CD4-positive, alpha-beta T cell (primary cell): ENCODE measurements at regions of chr17 and their contacts with region 1.

Region 1: GRCh38 chr17:56819431-56820145 is 14.1 kb downstream of the C17orf67 start:
- DNase-seq: peak; percentile 50 to 86 (median 63)
- ATAC-seq: peak; percentile 98
- H3K4me3 ChIP-seq: no peak overlapping the region
- H3K4me3 Mint-ChIP-seq: no peak overlapping the region
- H3K27ac ChIP-seq: no peak overlapping the region
- H3K27ac Mint-ChIP-seq: no peak overlapping the region
- H3K4me1 ChIP-seq: peaks cover 6% of the 10 kb centered on the region
- H3K4me1 Mint-ChIP-seq: peaks cover 13% of the 10 kb centered on the region
- H3K27me3 ChIP-seq: no peaks in the 10 kb centered on the region
- H3K27me3 Mint-ChIP-seq: no peaks in the 10 kb centered on the region
- CTCF ChIP-seq: peak; percentile 88

Region 2: GRCh38 chr17:56833809-56834379 is 14.3 kb after region 1 on chr17 and contains the starts of genes C17orf67 and DGKE:
- CTCF ChIA-PET with region 1: interaction called, 9 read pairs
- POLR2A ChIA-PET with region 1: interaction called, 20 read pairs
- intact Hi-C with region 1: loop called in 1 of 2 experiments (anchors 2 kb)
- DNase-seq: peak; percentile 97 to 100 (median 99)
- ATAC-seq: peak; percentile 87
- H3K4me3 ChIP-seq: peak within 1 kb of the TSS; percentile 96
- H3K4me3 Mint-ChIP-seq: peak within 1 kb of the TSS; percentile 99
- H3K27ac ChIP-seq: peak within 1 kb of the TSS; percentile 58 to 83
- H3K27ac Mint-ChIP-seq: peak within 1 kb of the TSS; percentile 95
- H3K4me1 ChIP-seq: peaks cover 41% of the 10 kb centered on the region
- H3K4me1 Mint-ChIP-seq: peaks cover 67% of the 10 kb centered on the region
- H3K27me3 ChIP-seq: no peaks in the 10 kb centered on the region
- H3K27me3 Mint-ChIP-seq: no peaks in the 10 kb centered on the region
- CTCF ChIP-seq: no peak
- total RNA-seq, gene C17orf67: 4.3 to 4.8 TPM
- total RNA-seq, gene DGKE: 20.0 to 22.3 TPM

Region 3: GRCh38 chr17:56866496-56866895 is 46.9 kb after region 1 on chr17:
- CTCF ChIA-PET with region 1: interaction called, 3 read pairs
- POLR2A ChIA-PET with region 1: no interaction called
- intact Hi-C with region 1: loop called in 1 of 2 experiments (anchors 1 kb)
- DNase-seq: peak in 4 of 14 experiments; percentile 2 to 34 (median 19)
- ATAC-seq: no peak
- H3K4me3 ChIP-seq: no peak overlapping the region
- H3K4me3 Mint-ChIP-seq: no peak overlapping the region
- H3K27ac ChIP-seq: no peak overlapping the region
- H3K27ac Mint-ChIP-seq: no peak overlapping the region
- H3K4me1 ChIP-seq: peaks cover 2% of the 10 kb centered on the region
- H3K4me1 Mint-ChIP-seq: peaks cover 9% of the 10 kb centered on the region
- H3K27me3 ChIP-seq: no peaks in the 10 kb centered on the region
- H3K27me3 Mint-ChIP-seq: no peaks in the 10 kb centered on the region
- CTCF ChIP-seq: peak; percentile 27

Region 4: DNA sequence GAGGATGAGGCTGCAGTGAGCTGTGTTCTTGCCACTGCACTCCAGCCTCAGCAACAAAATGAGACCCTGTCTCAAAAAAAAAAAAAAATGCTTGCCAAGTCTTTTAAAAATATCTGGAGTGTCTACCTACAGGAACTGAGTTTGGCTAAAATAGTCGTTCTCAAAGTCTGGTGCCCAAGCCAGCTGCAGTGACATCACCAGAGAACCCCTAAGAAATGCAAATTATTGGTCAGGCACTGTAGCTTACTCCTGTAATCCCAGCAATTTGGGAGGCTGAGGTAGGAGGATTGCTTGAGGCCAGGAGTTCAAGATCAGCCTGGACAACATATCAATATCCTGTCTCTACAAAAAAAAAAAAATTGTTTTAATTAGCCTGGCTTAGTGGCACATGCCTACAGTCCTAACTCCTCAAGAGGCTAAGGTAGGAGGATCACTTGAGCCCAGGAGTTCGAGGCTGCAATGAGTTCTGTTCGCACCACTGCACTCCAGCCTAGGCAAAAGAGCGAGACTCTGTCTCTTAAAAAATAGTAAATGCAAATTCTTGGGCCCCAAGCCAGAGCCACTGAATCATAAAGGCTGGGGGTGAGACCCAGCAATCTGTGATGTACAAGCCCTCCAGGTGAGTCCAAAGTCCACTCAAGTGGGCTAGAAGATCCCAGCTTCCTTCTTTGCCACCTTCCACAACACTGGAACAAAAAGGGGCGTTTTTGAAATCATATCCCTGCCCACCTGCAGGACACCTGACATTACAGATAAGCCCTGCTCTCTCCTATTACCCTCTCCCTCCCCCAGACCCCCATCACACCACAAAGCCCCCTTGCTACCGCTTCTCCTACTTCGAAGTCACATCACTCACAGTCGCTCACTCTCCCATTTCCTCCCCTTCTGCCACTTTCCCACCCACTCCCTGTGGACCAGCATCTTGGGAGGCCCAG is 77.3 kb after region 1 on chr17:
- CTCF ChIA-PET with region 1: no interaction called
- POLR2A ChIA-PET with region 1: no interaction called
- intact Hi-C with region 1: no loop called
- DNase-seq: peak in 1 of 14 experiments; percentile 19
- ATAC-seq: no peak
- H3K4me3 ChIP-seq: no peak overlapping the region
- H3K4me3 Mint-ChIP-seq: no peak overlapping the region
- H3K27ac ChIP-seq: no peak overlapping the region
- H3K27ac Mint-ChIP-seq: no peak overlapping the region
- H3K4me1 ChIP-seq: no peaks in the 10 kb centered on the region
- H3K4me1 Mint-ChIP-seq: peaks cover 6% of the 10 kb centered on the region
- H3K27me3 ChIP-seq: no peaks in the 10 kb centered on the region
- H3K27me3 Mint-ChIP-seq: no peaks in the 10 kb centered on the region
- CTCF ChIP-seq: no peak

Region 5: GRCh38 chr17:56939901-56940343 is 120.3 kb after region 1 on chr17:
- CTCF ChIA-PET with region 1: interaction called, 12 read pairs
- POLR2A ChIA-PET with region 1: interaction called, 3 read pairs
- intact Hi-C with region 1: loop called (anchors 1 kb)
- DNase-seq: peak in 3 of 14 experiments; percentile 63 to 74 (median 73)
- ATAC-seq: peak; percentile 79
- H3K4me3 ChIP-seq: no peak overlapping the region
- H3K4me3 Mint-ChIP-seq: no peak overlapping the region
- H3K27ac ChIP-seq: no peak overlapping the region
- H3K27ac Mint-ChIP-seq: no peak overlapping the region
- H3K4me1 ChIP-seq: no peaks in the 10 kb centered on the region
- H3K4me1 Mint-ChIP-seq: no peaks in the 10 kb centered on the region
- H3K27me3 ChIP-seq: no peaks in the 10 kb centered on the region
- H3K27me3 Mint-ChIP-seq: no peaks in the 10 kb centered on the region
- CTCF ChIP-seq: peak; percentile 85

Region 6: GRCh38 chr17:56960596-56961538 is 141.3 kb after region 1 on chr17 and contains the start of gene COIL:
- CTCF ChIA-PET with region 1: no interaction called
- POLR2A ChIA-PET with region 1: no interaction called
- intact Hi-C with region 1: loop called in 1 of 2 experiments (anchors 5 kb)
- DNase-seq: peak; percentile 89 to 96 (median 92)
- ATAC-seq: peak; percentile 97
- H3K4me3 ChIP-seq: peak within 1 kb of the TSS; percentile 68
- H3K4me3 Mint-ChIP-seq: peak within 1 kb of the TSS; percentile 93
- H3K27ac ChIP-seq: peak within 1 kb of the TSS; percentile 82 to 83
- H3K27ac Mint-ChIP-seq: peak within 1 kb of the TSS; percentile 78
- H3K4me1 ChIP-seq: peaks cover 26% of the 10 kb centered on the region
- H3K4me1 Mint-ChIP-seq: peaks cover 27% of the 10 kb centered on the region
- H3K27me3 ChIP-seq: peaks cover 0 to 2% of the 10 kb centered on the region in 2 experiments
- H3K27me3 Mint-ChIP-seq: no peaks in the 10 kb centered on the region
- CTCF ChIP-seq: peak; percentile 96
- total RNA-seq, gene COIL: 19.4 to 20.3 TPM